ENCODE measurements at regions of chr6 and their contacts with region 1.

Region 1: GRCh38 chr6:133923938-133924593 is 29.0 kb upstream of the TBPL1 start:
- DNase-seq: peak in 6 of 10 donors; percentile 34 to 85 (median 72)

Region 2: GRCh38 chr6:133951881-133952814 is 28.1 kb after region 1 on chr6:
- intact Hi-C with region 1: loop called (anchors 2 kb)
- DNase-seq: peak; percentile 48 to 93 (median 58)

Region 3: GRCh38 chr6:134063966-134064445 is 139.9 kb after region 1 on chr6:
- intact Hi-C with region 1: loop called (anchors 10 kb)
- DNase-seq: peak in 9 of 10 donors; percentile 36 to 94 (median 71)

Measured in posterior cingulate gyrus (tissue), 11 donors.